Mammary epithelial cell (primary cell): ENCODE measurements at regions of chr14 and their contacts with region 1.

Region 1: DNA sequence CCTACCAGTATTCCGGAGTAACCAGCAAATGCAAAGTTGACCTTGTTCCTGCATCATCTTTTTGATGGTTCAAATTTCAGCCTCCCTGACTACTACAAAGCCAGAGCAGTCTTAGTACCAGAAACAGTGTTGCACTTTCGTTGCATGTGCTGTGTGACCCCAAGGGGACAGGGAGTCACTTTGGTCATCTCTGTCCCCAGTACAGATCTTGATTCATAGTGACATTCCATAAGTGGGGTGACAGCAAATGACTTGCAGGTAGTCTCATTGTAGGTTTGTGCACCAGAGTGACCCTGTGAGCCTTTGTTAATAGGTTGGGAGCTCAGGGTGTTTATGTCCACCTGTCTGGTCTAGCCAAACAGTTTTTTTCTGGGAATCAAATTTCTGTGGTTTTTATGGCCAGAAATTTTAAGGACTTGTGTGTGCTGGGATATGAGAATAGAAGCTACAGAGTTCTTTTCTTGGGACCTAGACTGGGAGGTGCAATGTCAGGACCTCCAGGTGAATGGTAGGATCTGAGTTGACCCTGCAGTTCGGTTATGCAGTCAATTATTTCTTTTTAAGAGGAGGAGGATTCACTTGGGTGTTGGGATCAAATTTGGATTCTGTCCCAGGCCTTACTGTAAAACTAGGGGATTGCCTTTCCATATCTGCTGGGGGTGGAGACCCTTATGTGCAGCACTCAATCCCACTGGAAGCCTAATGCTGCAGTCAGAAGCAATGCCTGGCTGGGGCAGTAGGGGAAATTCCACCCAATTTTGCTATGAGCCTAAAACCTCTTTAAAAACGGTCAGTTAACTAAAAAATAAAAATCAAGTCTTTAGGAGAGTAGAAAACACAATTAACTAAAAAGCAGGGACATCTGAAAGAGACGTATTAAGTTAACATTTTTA is 10.1 kb downstream of the EIF5 start:
- DNase-seq: no peak
- H3K4me3 ChIP-seq: no peak overlapping the region
- H3K27ac ChIP-seq: no peak overlapping the region
- H3K4me1 ChIP-seq: no peaks in the 10 kb centered on the region
- H3K27me3 ChIP-seq: no peaks in the 10 kb centered on the region
- CTCF ChIP-seq: no peak

Region 2: DNA sequence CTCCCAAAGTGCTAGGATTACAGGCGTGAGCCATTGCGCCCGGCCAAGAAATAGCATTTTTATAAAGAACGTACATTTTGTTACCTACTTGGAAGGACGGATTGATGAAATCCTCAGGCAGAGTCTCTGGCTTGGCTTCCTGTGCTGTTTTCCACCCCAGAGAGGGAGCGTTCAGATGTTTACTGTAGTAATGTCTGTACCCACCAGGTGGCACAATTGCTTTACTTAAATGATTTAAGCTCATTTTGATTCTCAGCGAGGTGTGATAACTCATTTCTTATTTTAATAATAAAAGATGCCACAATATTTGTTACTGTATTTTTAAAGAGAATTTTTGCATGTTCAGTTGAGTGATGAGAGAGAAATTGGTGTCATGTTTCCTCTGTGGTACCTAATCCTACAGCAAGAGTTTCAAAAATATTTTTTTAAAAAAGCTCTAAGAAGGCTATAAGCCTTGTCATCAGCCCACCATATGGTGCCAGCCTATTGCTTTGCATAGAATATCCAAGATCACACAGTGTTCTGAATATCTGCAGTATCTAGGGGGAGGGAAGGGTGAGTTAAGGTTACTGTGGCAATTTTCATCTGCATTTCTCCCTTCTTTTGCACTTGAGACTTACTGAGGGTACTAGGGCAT is 649.5 kb before region 1 on chr14:
- CTCF ChIA-PET with region 1: no interaction called
- dilution Hi-C with region 1: no loop called
- in situ Hi-C with region 1: no loop called
- intact Hi-C with region 1: no loop called
- DNase-seq: peak; percentile 54
- H3K4me3 ChIP-seq: no peak overlapping the region
- H3K27ac ChIP-seq: no peak overlapping the region
- H3K4me1 ChIP-seq: peaks cover 7% of the 10 kb centered on the region
- H3K27me3 ChIP-seq: no peaks in the 10 kb centered on the region
- CTCF ChIP-seq: peak; percentile 52 to 55

Region 3: GRCh38 chr14:103391048-103391447 is 46.9 kb after region 1 on chr14:
- CTCF ChIA-PET with region 1: interaction called, 4 read pairs
- dilution Hi-C with region 1: no loop called
- in situ Hi-C with region 1: no loop called
- intact Hi-C with region 1: loop called (anchors 2 kb)
- DNase-seq: peak; percentile 51
- H3K4me3 ChIP-seq: no peak overlapping the region
- H3K27ac ChIP-seq: no peak overlapping the region
- H3K4me1 ChIP-seq: peaks cover 25% of the 10 kb centered on the region
- H3K27me3 ChIP-seq: no peaks in the 10 kb centered on the region
- CTCF ChIP-seq: peak; percentile 70 to 74